PC-9 (cell line): ENCODE measurements at regions of chr1 and their contacts with region 1.

Region 1: GRCh38 chr1:229341774-229342655 is 832 bp downstream of the CCSAP start:
- DNase-seq: peak; percentile 55 to 84
- H3K4me3 ChIP-seq: peak overlapping the region; percentile 90
- H3K27ac ChIP-seq: no peak overlapping the region
- H3K4me1 ChIP-seq: peaks cover 16% of the 10 kb centered on the region; the same call in 1 of the 2 replicates
- H3K27me3 ChIP-seq: peaks cover 14% of the 10 kb centered on the region; the same call in 1 of the 2 replicates
- CTCF ChIP-seq: no peak

Region 2: DNA sequence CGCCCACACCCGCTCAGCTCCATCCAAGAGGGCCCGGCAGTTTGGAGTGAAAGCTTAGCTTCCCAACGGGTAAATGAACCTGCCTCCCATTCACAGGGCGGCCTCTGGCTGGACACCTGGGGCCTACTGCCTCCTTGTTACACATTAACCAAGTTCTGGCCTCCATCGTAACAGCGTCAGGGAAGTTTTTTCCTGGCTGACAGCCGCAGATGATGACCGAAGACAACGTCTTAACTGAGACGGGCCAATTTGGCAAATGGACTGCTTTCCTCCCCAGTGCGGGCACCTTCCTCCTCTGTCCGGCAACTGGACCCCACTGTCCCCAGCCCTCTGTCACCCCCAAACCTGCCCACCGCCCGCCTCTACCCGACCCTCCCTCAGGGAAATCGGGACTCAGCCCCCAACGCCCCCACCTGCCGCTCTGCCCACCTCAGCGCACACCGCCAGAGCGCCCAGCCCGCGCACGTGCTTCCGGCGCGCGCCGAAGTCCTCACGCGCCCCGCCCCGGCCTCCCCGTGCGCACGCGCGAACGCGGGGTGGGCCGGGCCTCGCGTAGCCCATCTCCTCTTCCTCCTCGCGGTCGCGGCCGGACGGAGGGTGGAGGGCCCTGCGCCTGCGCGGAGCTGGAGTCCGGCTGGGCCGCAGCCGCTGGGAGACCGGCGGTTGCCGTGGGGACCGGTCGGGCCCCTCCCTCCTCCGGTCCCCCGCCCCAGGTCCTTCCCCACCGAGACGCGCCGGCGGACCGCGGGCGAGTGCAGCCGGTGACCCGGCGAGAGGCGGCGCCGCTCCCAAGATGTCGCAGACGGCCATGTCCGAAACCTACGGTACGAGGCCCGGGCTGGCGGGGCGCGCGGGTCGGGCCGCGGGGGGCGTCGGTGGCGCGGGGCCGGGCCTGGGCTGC is 71.2 kb before region 1 on chr1 and contains the start of gene RAB4A:
- CTCF ChIA-PET with region 1: no interaction called
- POLR2A ChIA-PET with region 1: no interaction called
- intact Hi-C with region 1: loop called (anchors 1 kb)
- DNase-seq: peak; percentile 60 to 89
- H3K4me3 ChIP-seq: peak within 1 kb of the TSS; percentile 71
- H3K27ac ChIP-seq: no peak within 1 kb of the TSS
- H3K4me1 ChIP-seq: peaks cover 25% of the 10 kb centered on the region
- H3K27me3 ChIP-seq: no peaks in the 10 kb centered on the region
- CTCF ChIP-seq: no peak
- total RNA-seq, gene RAB4A: 29.0 and 33.7 TPM in 2 replicates

Region 3: GRCh38 chr1:229287267-229287666 is 54.7 kb before region 1 on chr1:
- CTCF ChIA-PET with region 1: no interaction called
- POLR2A ChIA-PET with region 1: no interaction called
- intact Hi-C with region 1: no loop called
- DNase-seq: no peak
- H3K4me3 ChIP-seq: no peak overlapping the region
- H3K27ac ChIP-seq: no peak overlapping the region
- H3K4me1 ChIP-seq: no peaks in the 10 kb centered on the region
- H3K27me3 ChIP-seq: no peaks in the 10 kb centered on the region
- CTCF ChIP-seq: no peak

Region 4: GRCh38 chr1:229440851-229441537 is 99.0 kb after region 1 on chr1:
- CTCF ChIA-PET with region 1: no interaction called
- POLR2A ChIA-PET with region 1: no interaction called
- intact Hi-C with region 1: loop called (anchors 5 kb)
- DNase-seq: no peak
- H3K4me3 ChIP-seq: no peak overlapping the region
- H3K27ac ChIP-seq: no peak overlapping the region
- H3K4me1 ChIP-seq: no peaks in the 10 kb centered on the region
- H3K27me3 ChIP-seq: no peaks in the 10 kb centered on the region
- CTCF ChIP-seq: no peak